Body of pancreas (tissue), 4 donors: ENCODE measurements at regions of chr1 and their contacts with region 1.

Region 1: GRCh38 chr1:55277377-55278130 is 62.4 kb upstream of the USP24 start:
- DNase-seq: peak; percentile 79 to 85 (median 82)
- ATAC-seq: peak; percentile 90
- H3K4me3 ChIP-seq: no peak overlapping the region
- H3K27ac ChIP-seq: no peak overlapping the region
- H3K4me1 ChIP-seq: no peaks in the 10 kb centered on the region
- H3K27me3 ChIP-seq: no peaks in the 10 kb centered on the region
- CTCF ChIP-seq: peak; percentile 54 to 93 (median 85)
- POLR2A ChIP-seq: no peak

Region 2: GRCh38 chr1:54944610-54945544 is 332.7 kb before region 1 on chr1:
- intact Hi-C with region 1: no loop called
- DNase-seq: peak; percentile 74 to 86 (median 81)
- ATAC-seq: peak; percentile 70
- H3K4me3 ChIP-seq: no peak overlapping the region
- H3K27ac ChIP-seq: no peak overlapping the region
- H3K4me1 ChIP-seq: peaks cover 6% of the 10 kb centered on the region
- H3K27me3 ChIP-seq: no peaks in the 10 kb centered on the region
- CTCF ChIP-seq: peak; percentile 67 to 90 (median 75)
- POLR2A ChIP-seq: no peak

Region 3: DNA sequence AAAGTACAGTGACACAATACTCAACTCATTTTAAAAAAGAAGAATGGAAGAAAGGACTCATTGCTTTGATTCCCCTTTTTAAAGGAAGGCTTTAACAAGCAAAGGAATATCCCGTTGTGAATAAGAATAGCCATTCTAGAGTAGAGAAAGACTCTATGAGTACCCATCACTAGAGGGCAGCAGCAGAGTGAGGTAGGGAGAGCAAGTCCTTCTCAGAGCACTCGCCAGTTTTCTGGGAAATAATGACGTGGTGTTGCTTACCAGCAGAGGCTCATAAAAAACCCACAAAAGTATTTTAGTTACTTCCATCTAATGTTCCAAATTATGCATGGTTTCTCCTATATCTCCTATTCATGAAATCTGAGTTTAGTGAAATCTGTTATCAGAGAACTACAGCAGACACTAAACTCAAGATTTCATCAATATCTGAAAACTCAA is 137.0 kb before region 1 on chr1:
- intact Hi-C with region 1: loop called (anchors 5 kb)
- DNase-seq: peak; percentile 71 to 87 (median 76)
- ATAC-seq: peak; percentile 92
- H3K4me3 ChIP-seq: no peak overlapping the region
- H3K27ac ChIP-seq: peak overlapping the region in 1 of 4 donors; percentile 23
- H3K4me1 ChIP-seq: no peaks in the 10 kb centered on the region
- H3K27me3 ChIP-seq: no peaks in the 10 kb centered on the region
- CTCF ChIP-seq: peak; percentile 50 to 87 (median 82)
- POLR2A ChIP-seq: no peak

Region 4: DNA sequence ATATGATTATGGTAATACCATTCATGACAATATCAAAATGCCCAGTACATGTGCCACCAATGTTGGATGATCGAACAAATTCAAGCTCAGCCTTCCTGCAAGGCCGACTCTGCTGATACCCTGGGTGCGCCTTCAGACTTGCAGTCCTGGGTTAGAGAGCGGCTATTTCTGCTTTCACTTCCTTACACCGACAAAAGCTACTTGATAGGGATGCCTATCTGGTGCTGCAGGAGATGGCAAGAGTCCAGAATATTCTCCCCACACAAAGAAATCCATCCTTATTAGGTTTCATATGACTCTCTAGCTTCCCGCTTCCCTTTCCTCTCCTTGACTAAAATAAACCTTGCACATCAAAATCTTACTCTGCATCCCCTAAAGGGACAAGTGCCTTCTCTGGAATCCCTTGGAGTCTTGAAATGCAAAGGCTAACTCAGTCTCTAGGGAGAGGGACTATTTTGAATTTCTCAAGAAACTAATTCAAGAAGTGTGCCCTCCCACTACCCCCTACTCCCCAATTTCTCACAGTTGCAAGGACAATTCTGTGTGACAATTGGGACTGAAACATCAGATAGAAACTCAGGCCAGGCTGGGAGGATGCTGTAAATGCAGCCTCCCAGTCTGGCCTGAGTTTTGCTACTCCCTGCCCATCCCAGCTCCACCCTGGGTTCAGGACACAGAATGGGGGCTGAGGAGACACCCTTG is 40.7 kb after region 1 on chr1:
- intact Hi-C with region 1: no loop called
- DNase-seq: no peak
- ATAC-seq: peak; percentile 27
- H3K4me3 ChIP-seq: no peak overlapping the region
- H3K27ac ChIP-seq: no peak overlapping the region
- H3K4me1 ChIP-seq: no peaks in the 10 kb centered on the region
- H3K27me3 ChIP-seq: no peaks in the 10 kb centered on the region
- CTCF ChIP-seq: no peak
- POLR2A ChIP-seq: no peak

Region 5: GRCh38 chr1:55506686-55507577 is 229.4 kb after region 1 on chr1:
- intact Hi-C with region 1: no loop called
- DNase-seq: no peak
- ATAC-seq: no peak
- H3K4me3 ChIP-seq: no peak overlapping the region
- H3K27ac ChIP-seq: no peak overlapping the region
- H3K4me1 ChIP-seq: no peaks in the 10 kb centered on the region
- H3K27me3 ChIP-seq: no peaks in the 10 kb centered on the region
- CTCF ChIP-seq: no peak
- POLR2A ChIP-seq: no peak